Gastrocnemius medialis (tissue), 4 donors: ENCODE measurements at regions of chr2 and their contacts with region 1.

Region 1: GRCh38 chr2:190069936-190070696 is 7.6 kb upstream of the MSTN start:
- DNase-seq: no peak
- ATAC-seq: peak; percentile 69 to 90
- H3K4me3 ChIP-seq: no peak overlapping the region
- H3K27ac ChIP-seq: no peak overlapping the region
- H3K4me1 ChIP-seq: peaks cover 0 to 6% of the 10 kb centered on the region in 2 donors
- H3K27me3 ChIP-seq: no peaks in the 10 kb centered on the region
- CTCF ChIP-seq: peak in 4 of 5 experiments; percentile 55 to 67 (median 61)
- POLR2A ChIP-seq: no peak

Region 2: DNA sequence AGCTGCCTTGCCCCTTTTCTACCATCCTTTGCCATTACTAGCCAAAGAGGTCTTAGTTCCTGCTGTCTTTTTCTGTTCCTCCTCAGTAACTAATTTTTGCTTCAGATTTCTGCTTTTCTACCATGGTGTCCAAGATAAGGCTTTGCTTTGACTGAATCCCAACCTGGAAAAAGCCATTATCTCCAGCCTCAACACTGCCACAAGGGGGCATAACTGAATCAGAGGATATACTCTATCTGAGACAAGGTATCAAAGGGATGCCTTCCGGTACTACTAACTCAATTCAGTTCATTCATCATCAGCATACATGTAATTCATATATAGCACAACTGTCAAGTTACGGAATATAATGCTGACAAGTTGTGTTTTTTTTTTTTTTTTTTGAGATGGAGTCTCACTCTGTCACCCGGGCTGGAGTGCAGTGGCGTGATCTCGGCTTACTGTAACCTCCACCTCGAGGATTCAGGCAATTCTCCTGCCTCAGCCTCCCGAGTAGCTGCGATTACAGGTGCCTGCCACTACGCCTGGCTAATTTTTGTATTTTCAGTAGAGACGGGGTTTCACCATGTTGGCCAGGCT is 318.9 kb before region 1 on chr2:
- in situ Hi-C with region 1: no loop called
- intact Hi-C with region 1: loop called (anchors 5 kb)
- DNase-seq: no peak
- ATAC-seq: no peak
- H3K4me3 ChIP-seq: no peak overlapping the region
- H3K27ac ChIP-seq: no peak overlapping the region
- H3K4me1 ChIP-seq: no peaks in the 10 kb centered on the region
- H3K27me3 ChIP-seq: no peaks in the 10 kb centered on the region
- CTCF ChIP-seq: peak; percentile 21 to 56 (median 34)
- POLR2A ChIP-seq: no peak

Region 3: DNA sequence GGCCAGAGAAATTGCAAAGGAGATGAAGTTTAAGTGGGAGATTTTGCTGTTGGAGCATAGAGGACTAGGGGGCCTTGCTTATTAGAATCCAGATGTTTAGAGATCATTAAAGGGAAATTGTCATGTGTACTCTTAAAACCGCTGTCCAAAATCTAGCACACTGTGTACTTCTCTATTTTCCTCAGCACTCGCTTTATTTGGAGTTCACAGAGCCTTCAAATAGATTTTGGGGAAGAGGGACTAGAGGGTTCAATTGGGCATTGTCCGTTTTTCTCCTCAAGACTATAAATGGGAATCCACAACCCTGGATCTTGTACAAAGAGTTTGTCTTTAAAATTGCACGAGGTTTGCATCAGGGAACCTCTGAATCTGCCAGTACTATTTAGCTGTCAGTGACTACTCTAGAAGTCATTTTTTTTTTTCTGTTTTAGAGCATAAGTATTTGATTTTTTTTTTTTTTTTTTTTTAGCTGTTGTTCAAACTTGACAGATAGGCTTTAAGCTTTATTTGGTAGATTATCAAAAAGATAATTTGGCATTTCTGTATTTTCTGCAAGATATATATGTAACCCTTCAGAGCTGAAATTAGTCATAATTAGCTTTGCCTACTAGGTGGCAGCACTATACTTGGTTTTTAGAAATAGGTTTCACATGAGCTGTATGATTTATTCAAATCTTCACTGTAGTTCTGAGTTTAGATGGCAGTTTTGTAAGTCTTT is 271.6 kb before region 1 on chr2:
- in situ Hi-C with region 1: loop called in 3 of 4 experiments (anchors 10 to 25 kb)
- intact Hi-C with region 1: loop called (anchors 2 kb)
- DNase-seq: no peak
- ATAC-seq: peak; percentile 49 to 64
- H3K4me3 ChIP-seq: no peak overlapping the region
- H3K27ac ChIP-seq: peak overlapping the region in 3 of 4 donors; percentile 6 to 29 (median 7)
- H3K4me1 ChIP-seq: peaks cover 17 to 25% of the 10 kb centered on the region in 2 donors
- H3K27me3 ChIP-seq: no peaks in the 10 kb centered on the region
- CTCF ChIP-seq: peak in 4 of 5 experiments; percentile 28 to 46 (median 36)
- POLR2A ChIP-seq: no peak

Region 4: GRCh38 chr2:190023861-190024260 is 46.3 kb before region 1 on chr2:
- in situ Hi-C with region 1: no loop called
- intact Hi-C with region 1: loop called (anchors 2 kb)
- DNase-seq: no peak
- ATAC-seq: peak; percentile 47 to 74
- H3K4me3 ChIP-seq: no peak overlapping the region
- H3K27ac ChIP-seq: no peak overlapping the region
- H3K4me1 ChIP-seq: no peaks in the 10 kb centered on the region
- H3K27me3 ChIP-seq: no peaks in the 10 kb centered on the region
- CTCF ChIP-seq: peak; percentile 23 to 65 (median 36)
- POLR2A ChIP-seq: no peak

Region 5: GRCh38 chr2:190927301-190927700 is 857.2 kb after region 1 on chr2:
- in situ Hi-C with region 1: no loop called
- intact Hi-C with region 1: no loop called
- DNase-seq: no peak
- ATAC-seq: no peak
- H3K4me3 ChIP-seq: no peak overlapping the region
- H3K27ac ChIP-seq: no peak overlapping the region
- H3K4me1 ChIP-seq: no peaks in the 10 kb centered on the region
- H3K27me3 ChIP-seq: no peaks in the 10 kb centered on the region
- CTCF ChIP-seq: no peak
- POLR2A ChIP-seq: no peak